CD4-positive, alpha-beta memory T cell (primary cell): ENCODE measurements at regions of chr20 and their contacts with region 1.

Region 1: DNA sequence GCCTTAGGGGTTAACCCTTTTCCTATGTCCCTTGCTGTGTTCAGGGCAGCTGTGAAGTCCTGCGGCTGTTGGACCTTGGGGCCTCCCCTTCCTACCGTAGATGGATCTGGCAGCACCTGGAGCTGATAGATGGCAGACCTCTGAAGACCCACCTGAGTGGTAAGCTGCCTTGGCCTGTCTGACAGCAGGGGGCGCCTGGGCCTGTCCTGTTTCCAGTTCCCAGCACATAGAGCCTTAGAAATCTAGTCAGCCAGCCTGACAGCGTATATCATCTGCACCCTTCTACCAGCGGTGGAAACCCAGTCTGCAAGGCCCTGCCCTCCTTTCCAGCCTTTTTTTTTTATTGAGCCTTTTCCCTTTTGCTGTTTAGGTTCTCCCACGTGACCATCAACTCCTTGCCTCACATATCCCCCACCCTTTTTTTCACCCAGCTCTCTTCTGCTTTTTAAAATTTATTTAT is 26.6 kb downstream of the CNBD2 start:
- DNase-seq: peak; percentile 70 to 74 (median 71)
- H3K4me3 ChIP-seq: no peak overlapping the region
- H3K4me3 Mint-ChIP-seq: peak overlapping the region in 1 of 8 donors; percentile 2
- H3K27ac ChIP-seq: no peak overlapping the region
- H3K27ac Mint-ChIP-seq: peak overlapping the region in 2 of 7 donors; percentile 42 to 48
- H3K4me1 ChIP-seq: peaks cover 3% of the 10 kb centered on the region
- H3K4me1 Mint-ChIP-seq: peaks cover 5 to 8% (median 6%) of the 10 kb centered on the region in 4 donors
- H3K27me3 ChIP-seq: no peaks in the 10 kb centered on the region
- H3K27me3 Mint-ChIP-seq: peaks cover 3 to 5% of the 10 kb centered on the region in 2 donors

Region 2: GRCh38 chr20:35739294-35740163 is 255.5 kb before region 1 on chr20:
- CTCF ChIA-PET with region 1: no interaction called
- POLR2A ChIA-PET with region 1: no interaction called
- intact Hi-C with region 1: no loop called
- DNase-seq: peak in 3 of 5 donors; percentile 29 to 46 (median 37)
- H3K4me3 ChIP-seq: peak overlapping the region; percentile 62 to 99
- H3K4me3 Mint-ChIP-seq: peak overlapping the region; percentile 90 to 100 (median 99)
- H3K27ac ChIP-seq: peak overlapping the region; percentile 100
- H3K27ac Mint-ChIP-seq: peak overlapping the region; percentile 71 to 100 (median 98)
- H3K4me1 ChIP-seq: peaks cover 80% of the 10 kb centered on the region
- H3K4me1 Mint-ChIP-seq: peaks cover 39 to 77% (median 54%) of the 10 kb centered on the region in 4 donors
- H3K27me3 ChIP-seq: no peaks in the 10 kb centered on the region
- H3K27me3 Mint-ChIP-seq: peaks cover 0 to 3% of the 10 kb centered on the region in 2 donors

Region 3: DNA sequence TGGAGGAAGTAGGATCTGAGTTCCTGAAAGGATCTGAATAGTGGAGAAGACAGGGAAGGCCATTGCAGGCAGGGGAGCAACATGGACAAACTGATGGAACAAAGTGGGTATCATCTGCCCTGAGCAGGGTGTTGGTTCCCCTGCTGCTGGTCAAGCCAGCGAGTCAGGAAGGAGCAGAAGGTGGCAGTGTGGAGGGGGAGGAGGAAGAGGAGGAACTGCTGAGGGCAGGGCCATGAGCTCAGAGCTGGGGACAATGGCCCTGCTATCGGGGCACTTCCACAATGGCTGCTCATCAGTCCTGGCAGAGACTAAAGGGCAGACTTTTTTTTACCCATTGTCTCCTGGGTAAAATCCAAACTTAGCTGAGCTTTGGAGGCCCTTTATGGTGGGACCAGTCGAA is 13.1 kb before region 1 on chr20:
- CTCF ChIA-PET with region 1: interaction called, 31 read pairs
- POLR2A ChIA-PET with region 1: no interaction called
- intact Hi-C with region 1: no loop called
- DNase-seq: no peak
- H3K4me3 ChIP-seq: no peak overlapping the region
- H3K4me3 Mint-ChIP-seq: no peak overlapping the region
- H3K27ac ChIP-seq: no peak overlapping the region
- H3K27ac Mint-ChIP-seq: no peak overlapping the region
- H3K4me1 ChIP-seq: no peaks in the 10 kb centered on the region
- H3K4me1 Mint-ChIP-seq: no peaks in the 10 kb centered on the region
- H3K27me3 ChIP-seq: no peaks in the 10 kb centered on the region
- H3K27me3 Mint-ChIP-seq: peaks cover 1 to 6% of the 10 kb centered on the region in 2 donors

Region 4: DNA sequence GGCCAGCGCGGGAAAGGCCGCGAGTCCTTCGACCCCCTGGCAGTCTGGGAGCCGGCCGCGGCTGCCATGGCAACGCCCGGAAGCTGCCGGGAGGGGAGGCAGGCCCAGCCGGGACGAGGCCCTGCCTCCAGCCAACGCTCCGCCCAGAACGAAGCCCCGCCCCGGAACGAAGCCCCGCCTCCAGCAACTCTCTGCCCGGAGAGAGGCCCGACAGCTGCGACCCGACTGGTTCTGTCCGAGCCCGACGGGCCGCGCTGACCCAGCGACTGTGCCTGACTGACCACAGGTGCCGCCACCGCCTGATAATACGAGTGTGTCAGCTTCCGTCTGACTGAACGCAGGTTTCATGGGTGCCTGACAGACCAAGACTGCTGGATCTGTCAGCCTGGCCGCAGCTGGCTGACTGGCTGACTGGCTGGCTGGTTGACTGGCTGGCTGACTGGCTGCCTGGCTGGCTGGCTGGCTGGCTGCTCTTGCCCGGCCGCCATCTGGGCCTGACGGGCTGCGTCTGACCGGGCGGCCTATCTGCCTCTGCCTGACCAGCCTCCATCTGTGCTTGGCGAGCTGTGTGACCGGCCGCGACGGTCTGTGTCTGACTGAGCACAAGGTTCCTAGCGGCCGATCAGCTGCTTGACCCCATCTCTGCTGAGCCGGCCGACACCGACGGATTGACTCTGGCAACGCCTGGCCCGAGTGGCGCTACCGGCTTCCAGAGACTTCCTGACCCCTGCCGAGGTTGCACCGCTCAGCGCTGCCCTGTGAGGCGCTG is 69.8 kb after region 1 on chr20:
- CTCF ChIA-PET with region 1: interaction called, 7 read pairs
- POLR2A ChIA-PET with region 1: no interaction called
- intact Hi-C with region 1: loop called (anchors 10 kb)
- DNase-seq: peak; percentile 89 to 94 (median 90)
- H3K4me3 ChIP-seq: peak overlapping the region; percentile 47 to 75
- H3K4me3 Mint-ChIP-seq: peak overlapping the region; percentile 87 to 92 (median 89)
- H3K27ac ChIP-seq: peak overlapping the region; percentile 45
- H3K27ac Mint-ChIP-seq: peak overlapping the region; percentile 60 to 89 (median 77)
- H3K4me1 ChIP-seq: peaks cover 11% of the 10 kb centered on the region
- H3K4me1 Mint-ChIP-seq: peaks cover 0 to 5% (median 4%) of the 10 kb centered on the region in 4 donors
- H3K27me3 ChIP-seq: no peaks in the 10 kb centered on the region
- H3K27me3 Mint-ChIP-seq: peaks cover 0 to 3% of the 10 kb centered on the region in 2 donors

Region 5: DNA sequence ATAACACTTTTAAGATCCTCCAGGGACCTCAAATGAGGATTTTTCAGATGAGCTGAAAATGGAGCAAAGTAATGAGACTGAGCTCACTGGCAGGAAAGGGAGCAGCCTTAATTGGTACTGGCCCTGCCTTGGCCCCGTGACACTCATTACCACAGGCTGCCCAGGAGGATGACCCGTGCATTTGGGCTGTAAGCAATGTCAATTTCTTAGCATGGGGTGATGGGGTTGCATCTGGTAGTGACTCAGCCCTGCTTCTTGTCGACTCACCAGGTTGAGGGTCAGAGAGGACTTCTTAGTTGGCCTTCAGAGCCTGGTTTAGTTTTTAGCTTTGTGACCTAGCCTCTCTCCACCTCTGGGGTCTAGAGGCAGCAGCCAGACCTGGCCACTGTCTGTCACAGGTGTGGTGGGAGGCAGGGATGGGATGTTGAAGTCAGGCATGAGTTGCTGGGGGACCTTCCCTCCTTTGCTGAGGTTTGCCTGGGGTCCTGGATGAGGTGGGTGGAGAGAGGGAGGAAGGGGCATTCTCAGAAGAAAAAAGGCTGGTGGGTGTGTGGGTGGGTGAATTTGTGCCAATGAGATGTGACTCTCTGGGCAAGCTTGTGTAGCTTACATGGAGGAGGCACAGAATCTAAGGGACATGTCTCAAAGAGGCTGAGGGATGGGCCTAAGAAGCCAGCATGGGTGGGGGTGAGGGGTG is 133.6 kb after region 1 on chr20:
- CTCF ChIA-PET with region 1: interaction called, 517 read pairs
- POLR2A ChIA-PET with region 1: no interaction called
- intact Hi-C with region 1: no loop called
- DNase-seq: no peak
- H3K4me3 ChIP-seq: no peak overlapping the region
- H3K4me3 Mint-ChIP-seq: no peak overlapping the region
- H3K27ac ChIP-seq: no peak overlapping the region
- H3K27ac Mint-ChIP-seq: no peak overlapping the region
- H3K4me1 ChIP-seq: no peaks in the 10 kb centered on the region
- H3K4me1 Mint-ChIP-seq: no peaks in the 10 kb centered on the region
- H3K27me3 ChIP-seq: no peaks in the 10 kb centered on the region
- H3K27me3 Mint-ChIP-seq: peaks cover 0 to 4% of the 10 kb centered on the region in 2 donors

Region 6: DNA sequence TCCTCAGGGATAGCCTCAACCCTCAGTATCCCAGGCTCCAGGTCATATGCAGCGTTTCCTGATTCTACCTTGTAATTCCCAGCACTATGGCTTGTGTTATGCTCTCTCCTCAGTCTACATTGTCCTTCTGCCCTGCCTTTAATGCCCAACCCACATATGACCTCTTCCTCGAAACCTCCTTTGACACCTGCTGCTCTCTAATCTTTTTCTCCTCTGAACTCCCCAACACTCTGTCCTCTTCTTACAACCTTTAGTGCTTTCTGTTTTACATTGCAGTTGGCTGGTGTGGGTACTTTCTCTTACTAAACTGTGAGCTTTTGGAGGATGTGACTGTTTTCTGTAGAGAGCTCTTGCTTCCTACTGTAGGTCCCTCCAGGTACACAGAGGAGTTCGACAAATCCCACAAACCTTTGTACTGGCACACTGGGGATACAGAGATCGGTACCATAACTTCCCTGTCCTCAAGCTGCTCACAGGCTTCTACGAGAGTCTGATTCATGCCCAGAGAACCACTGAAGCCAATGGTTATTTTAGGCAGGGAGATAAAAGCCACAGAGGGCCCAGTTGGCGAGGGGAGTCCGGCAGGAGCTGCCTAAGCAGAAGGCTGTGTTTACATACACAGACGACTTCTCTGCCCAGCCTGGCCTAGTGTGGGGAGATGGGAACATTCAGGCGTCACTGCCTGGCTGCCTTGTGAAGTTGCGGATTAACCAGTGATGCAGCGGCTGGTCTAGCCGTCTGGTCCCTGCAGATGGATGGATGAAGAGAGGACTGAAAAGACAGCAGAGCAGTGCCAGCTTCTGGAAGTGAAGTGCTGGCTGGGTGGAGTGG is 151.1 kb after region 1 on chr20:
- CTCF ChIA-PET with region 1: interaction called, 517 read pairs
- POLR2A ChIA-PET with region 1: no interaction called
- intact Hi-C with region 1: no loop called
- DNase-seq: no peak
- H3K4me3 ChIP-seq: no peak overlapping the region
- H3K4me3 Mint-ChIP-seq: no peak overlapping the region
- H3K27ac ChIP-seq: no peak overlapping the region
- H3K27ac Mint-ChIP-seq: no peak overlapping the region
- H3K4me1 ChIP-seq: no peaks in the 10 kb centered on the region
- H3K4me1 Mint-ChIP-seq: peaks cover 0 to 4% (median 0%) of the 10 kb centered on the region in 4 donors
- H3K27me3 ChIP-seq: no peaks in the 10 kb centered on the region
- H3K27me3 Mint-ChIP-seq: peaks cover 14 to 28% of the 10 kb centered on the region in 2 donors

Region 7: DNA sequence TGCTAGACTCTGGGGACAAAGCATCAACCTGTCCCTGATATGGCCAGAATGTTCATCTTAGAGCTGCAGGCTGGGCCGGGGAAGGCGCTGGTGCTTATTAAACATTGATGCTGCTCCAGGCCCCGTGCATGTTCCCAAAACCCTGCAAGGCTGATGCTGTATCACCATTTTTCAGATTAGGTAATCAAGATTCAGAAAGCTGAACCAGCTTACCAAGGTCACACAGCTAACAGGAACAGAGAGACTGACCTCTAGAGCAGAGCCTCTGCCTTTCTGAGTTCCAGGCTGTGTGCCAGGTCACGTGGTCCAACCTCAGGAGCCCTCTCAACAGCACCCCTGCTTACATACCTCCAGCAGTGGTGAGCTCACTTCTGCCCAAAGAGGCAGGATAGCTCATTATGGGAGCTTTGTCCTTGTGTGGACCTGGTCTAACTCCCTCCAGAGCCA is 1891.8 kb after region 1 on chr20:
- CTCF ChIA-PET with region 1: no interaction called
- POLR2A ChIA-PET with region 1: no interaction called
- intact Hi-C with region 1: no loop called
- DNase-seq: no peak
- H3K4me3 ChIP-seq: no peak overlapping the region
- H3K4me3 Mint-ChIP-seq: no peak overlapping the region
- H3K27ac ChIP-seq: no peak overlapping the region
- H3K27ac Mint-ChIP-seq: no peak overlapping the region
- H3K4me1 ChIP-seq: no peaks in the 10 kb centered on the region
- H3K4me1 Mint-ChIP-seq: no peaks in the 10 kb centered on the region
- H3K27me3 ChIP-seq: no peaks in the 10 kb centered on the region
- H3K27me3 Mint-ChIP-seq: peaks cover 3 to 6% of the 10 kb centered on the region in 2 donors